ENCODE measurements at regions of chr9 and their contacts with region 1.

Region 1: GRCh38 chr9:109859433-109859832 is 79.4 kb downstream of the PALM2AKAP2 start:
- DNase-seq: no peak
- H3K4me3 Mint-ChIP-seq: no peak overlapping the region
- H3K27ac Mint-ChIP-seq: no peak overlapping the region
- H3K4me1 Mint-ChIP-seq: peaks cover 4% of the 10 kb centered on the region
- H3K27me3 Mint-ChIP-seq: no peaks in the 10 kb centered on the region
- CTCF ChIP-seq: no peak

Region 2: GRCh38 chr9:109870365-109870764 is 10.9 kb after region 1 on chr9:
- CTCF ChIA-PET with region 1: interaction called, 10 read pairs
- POLR2A ChIA-PET with region 1: no interaction called
- intact Hi-C with region 1: no loop called
- DNase-seq: no peak
- H3K4me3 Mint-ChIP-seq: no peak overlapping the region
- H3K27ac Mint-ChIP-seq: no peak overlapping the region
- H3K4me1 Mint-ChIP-seq: no peaks in the 10 kb centered on the region
- H3K27me3 Mint-ChIP-seq: no peaks in the 10 kb centered on the region
- CTCF ChIP-seq: no peak

Measured in MCF 10A (cell line).